ENCODE measurements at regions of chr17 and their contacts with region 1.

Region 1: GRCh38 chr17:47840740-47841603 is at the start of gene SCRN2:
- DNase-seq: peak; percentile 81 to 95
- H3K4me3 ChIP-seq: peak within 1 kb of the TSS; percentile 85
- H3K27ac ChIP-seq: peak within 1 kb of the TSS; percentile 23
- H3K4me1 ChIP-seq: peaks cover 60% of the 10 kb centered on the region
- H3K27me3 ChIP-seq: no peaks in the 10 kb centered on the region
- CTCF ChIP-seq: peak; percentile 100
- total RNA-seq, gene SCRN2: 31.7 and 43.9 TPM in 2 replicates

Region 2: GRCh38 chr17:47821424-47822391 is 19.3 kb before region 1 on chr17 and contains the start of gene OSBPL7:
- CTCF ChIA-PET with region 1: no interaction called
- POLR2A ChIA-PET with region 1: no interaction called
- intact Hi-C with region 1: loop called (anchors 2 kb)
- DNase-seq: peak; percentile 81 to 90
- H3K4me3 ChIP-seq: peak within 1 kb of the TSS; percentile 90
- H3K27ac ChIP-seq: peak within 1 kb of the TSS; percentile 79
- H3K4me1 ChIP-seq: peaks cover 30% of the 10 kb centered on the region
- H3K27me3 ChIP-seq: no peaks in the 10 kb centered on the region
- CTCF ChIP-seq: no peak; the same call in 1 of the 2 replicates
- total RNA-seq, gene OSBPL7: 32.2 and 35.9 TPM in 2 replicates

Region 3: DNA sequence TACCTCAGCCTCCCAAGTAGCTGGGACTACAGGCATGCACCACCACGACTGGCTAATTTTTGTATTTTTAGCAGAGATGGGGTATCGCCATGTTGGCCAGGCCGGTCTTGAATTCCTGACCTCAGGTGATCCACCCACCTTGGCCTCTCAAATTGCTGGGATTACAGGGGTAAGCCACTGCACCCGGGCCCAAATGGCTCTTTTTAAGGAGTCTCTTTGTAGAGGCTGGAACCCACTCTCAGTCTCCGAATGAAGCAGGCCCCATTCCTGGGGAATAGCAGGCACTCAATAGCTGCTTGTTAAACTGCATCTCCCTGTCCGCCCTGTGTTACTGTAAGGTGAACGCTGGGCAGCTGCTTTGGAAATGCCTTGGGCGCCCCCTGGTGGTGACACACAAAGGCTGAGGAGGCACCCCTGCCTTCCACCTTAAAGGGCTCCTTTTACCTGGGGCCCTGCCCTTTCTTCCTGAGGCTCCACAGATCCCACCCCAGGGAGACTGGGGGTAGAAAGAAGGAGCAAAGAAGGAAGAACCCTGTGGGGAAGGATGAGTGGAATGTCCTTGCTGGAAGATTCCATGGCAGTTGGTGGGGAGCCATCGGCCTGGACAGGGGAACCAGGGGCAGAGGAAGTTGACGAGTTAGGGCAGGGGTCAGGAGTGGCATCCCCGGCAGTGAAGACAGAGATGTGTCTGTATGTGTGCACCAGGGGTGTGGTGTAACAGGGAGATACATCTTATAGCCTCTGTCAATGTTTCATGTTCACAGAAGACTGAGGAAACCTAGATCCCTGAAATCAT is 49.0 kb after region 1 on chr17:
- CTCF ChIA-PET with region 1: interaction called, 20 read pairs
- POLR2A ChIA-PET with region 1: interaction called, 3 read pairs
- intact Hi-C with region 1: loop called (anchors 1 kb)
- DNase-seq: peak; percentile 71 to 74
- H3K4me3 ChIP-seq: no peak overlapping the region
- H3K27ac ChIP-seq: no peak overlapping the region
- H3K4me1 ChIP-seq: peaks cover 63% of the 10 kb centered on the region
- H3K27me3 ChIP-seq: no peaks in the 10 kb centered on the region
- CTCF ChIP-seq: peak; percentile 95

Region 4: GRCh38 chr17:47915776-47916398 is 74.9 kb after region 1 on chr17:
- CTCF ChIA-PET with region 1: no interaction called
- POLR2A ChIA-PET with region 1: interaction called, 11 read pairs
- intact Hi-C with region 1: no loop called
- DNase-seq: no peak
- H3K4me3 ChIP-seq: no peak overlapping the region
- H3K27ac ChIP-seq: no peak overlapping the region
- H3K4me1 ChIP-seq: no peaks in the 10 kb centered on the region
- H3K27me3 ChIP-seq: no peaks in the 10 kb centered on the region
- CTCF ChIP-seq: no peak

Region 5: DNA sequence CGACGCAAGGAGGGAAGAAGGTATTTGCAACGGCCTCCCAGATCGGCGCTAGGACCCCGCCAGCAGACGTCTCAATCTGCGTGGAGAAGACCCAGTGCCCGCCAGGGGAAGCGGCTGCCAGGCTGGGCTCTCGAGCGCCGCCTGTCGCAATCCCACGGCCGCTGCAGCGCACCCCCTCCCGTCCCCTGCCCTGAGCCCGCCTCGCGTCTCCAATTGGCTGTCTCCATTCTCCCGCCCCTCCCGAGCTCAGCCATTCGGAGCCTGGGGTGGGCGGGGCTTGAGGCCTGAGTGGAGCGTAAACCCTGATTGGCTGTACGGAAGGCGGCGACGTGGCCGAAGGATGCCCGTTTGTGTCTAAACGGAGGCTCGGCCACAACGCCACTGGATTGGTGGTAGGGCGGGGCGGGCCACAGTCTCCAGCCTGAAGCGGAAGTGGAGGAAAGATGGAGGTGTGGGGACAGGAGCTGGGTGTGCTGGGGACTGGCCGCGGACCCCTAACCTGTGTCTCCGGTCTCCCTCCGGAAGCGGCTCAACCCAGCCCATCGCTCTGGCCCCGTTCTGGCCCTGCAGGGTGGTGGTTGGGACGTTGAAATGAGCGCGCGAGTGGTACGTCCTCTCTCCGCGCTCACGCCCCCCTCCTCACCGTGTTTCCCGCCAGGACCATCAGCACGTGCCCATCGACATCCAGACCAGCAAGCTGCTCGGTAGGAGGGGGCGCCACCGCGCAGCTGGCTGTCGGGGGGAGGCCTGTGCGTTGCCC is 129.9 kb after region 1 on chr17 and contains the start of gene CDK5RAP3:
- CTCF ChIA-PET with region 1: interaction called, 3 read pairs
- POLR2A ChIA-PET with region 1: no interaction called
- intact Hi-C with region 1: loop called (anchors 2 kb)
- DNase-seq: peak; percentile 97 to 99
- H3K4me3 ChIP-seq: peak within 1 kb of the TSS; percentile 78
- H3K27ac ChIP-seq: peak within 1 kb of the TSS; percentile 60
- H3K4me1 ChIP-seq: peaks cover 52% of the 10 kb centered on the region
- H3K27me3 ChIP-seq: no peaks in the 10 kb centered on the region
- CTCF ChIP-seq: peak; percentile 90
- total RNA-seq, gene CDK5RAP3: 147 and 195 TPM in 2 replicates